WTC11 (cell line): ENCODE measurements at regions of chr1 and their contacts with region 1.

Region 1: GRCh38 chr1:156114101-156114916 is at the start of gene LMNA:
- DNase-seq: peak; percentile 80
- ATAC-seq: peak; percentile 91
- H3K4me3 Mint-ChIP-seq: peak within 1 kb of the TSS; percentile 93
- H3K27ac Mint-ChIP-seq: no peak within 1 kb of the TSS
- H3K4me1 Mint-ChIP-seq: peaks cover 34% of the 10 kb centered on the region
- H3K27me3 Mint-ChIP-seq: peaks cover 18% of the 10 kb centered on the region
- CTCF ChIP-seq: no peak
- total RNA-seq, gene LMNA: 40.7 to 68.8 TPM (median 46.2 TPM) in 3 replicates

Region 2: GRCh38 chr1:156072251-156072650 is 42.1 kb before region 1 on chr1:
- CTCF ChIA-PET with region 1: no interaction called
- POLR2A ChIA-PET with region 1: no interaction called
- DNase-seq: no peak
- ATAC-seq: no peak
- H3K4me3 Mint-ChIP-seq: no peak overlapping the region
- H3K27ac Mint-ChIP-seq: peak overlapping the region; percentile 81
- H3K4me1 Mint-ChIP-seq: peaks cover 55% of the 10 kb centered on the region
- H3K27me3 Mint-ChIP-seq: no peaks in the 10 kb centered on the region
- CTCF ChIP-seq: no peak

Region 3: GRCh38 chr1:156096640-156097391 is 17.5 kb before region 1 on chr1:
- CTCF ChIA-PET with region 1: interaction called, 1,176 read pairs
- POLR2A ChIA-PET with region 1: interaction called, 5 read pairs
- DNase-seq: peak; percentile 92
- ATAC-seq: peak; percentile 94
- H3K4me3 Mint-ChIP-seq: no peak overlapping the region
- H3K27ac Mint-ChIP-seq: no peak overlapping the region
- H3K4me1 Mint-ChIP-seq: peaks cover 20% of the 10 kb centered on the region
- H3K27me3 Mint-ChIP-seq: no peaks in the 10 kb centered on the region
- CTCF ChIP-seq: peak; percentile 90